ENCODE measurements at regions of chr1 and their contacts with region 1.

Region 1: DNA sequence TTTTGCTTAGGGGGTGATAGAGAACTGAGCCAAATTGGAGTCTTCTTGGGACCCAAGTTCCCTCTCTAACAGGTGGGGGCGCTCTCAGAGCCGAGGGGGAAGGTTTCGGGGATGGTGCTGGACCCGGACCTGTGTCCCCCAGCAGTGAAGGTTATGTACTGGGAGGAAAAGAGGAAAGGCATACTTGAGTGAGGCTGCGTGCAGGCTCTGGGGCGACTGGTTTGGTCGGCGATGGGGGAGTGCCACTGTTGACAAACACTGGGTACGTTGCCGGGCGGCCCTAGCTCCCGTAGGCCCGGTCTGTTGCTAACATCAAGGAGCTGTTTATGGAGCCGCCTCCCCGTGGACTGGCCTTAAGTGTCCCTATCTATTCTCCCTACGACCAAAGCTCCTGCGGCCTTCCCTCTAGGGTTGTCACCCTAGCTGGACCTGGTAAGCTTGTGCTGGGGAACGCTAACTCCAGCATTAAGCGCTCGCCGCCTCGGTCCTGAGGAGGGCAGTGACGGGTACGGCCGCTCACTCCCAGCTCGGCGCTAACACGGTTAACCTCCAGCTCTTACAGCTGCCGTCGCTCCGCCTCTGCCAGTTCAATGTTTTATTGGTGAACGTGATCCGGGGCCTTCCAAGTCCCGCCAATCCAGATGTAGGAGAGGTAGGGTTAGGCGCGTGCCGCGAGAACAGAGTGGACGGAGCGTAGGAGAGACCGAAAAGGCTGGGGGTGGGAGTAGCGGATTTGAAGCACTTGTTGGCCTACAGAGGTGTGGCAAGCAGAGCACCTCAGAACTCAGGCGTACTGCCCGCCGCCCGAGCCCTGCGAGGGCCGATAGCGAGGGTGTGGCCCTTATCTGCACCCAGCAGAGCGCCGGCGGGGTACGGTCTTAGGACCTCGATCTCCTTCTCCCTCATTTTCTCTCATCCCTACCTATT is at the start of gene PPOX:
- DNase-seq: peak; percentile 98
- H3K4me3 Mint-ChIP-seq: peak within 1 kb of the TSS; percentile 83
- H3K27ac Mint-ChIP-seq: peak within 1 kb of the TSS; percentile 98
- H3K4me1 Mint-ChIP-seq: peaks cover 45% of the 10 kb centered on the region
- H3K27me3 Mint-ChIP-seq: no peaks in the 10 kb centered on the region
- total RNA-seq, gene PPOX: 28.6 and 31.1 TPM in 2 replicates

Region 2: DNA sequence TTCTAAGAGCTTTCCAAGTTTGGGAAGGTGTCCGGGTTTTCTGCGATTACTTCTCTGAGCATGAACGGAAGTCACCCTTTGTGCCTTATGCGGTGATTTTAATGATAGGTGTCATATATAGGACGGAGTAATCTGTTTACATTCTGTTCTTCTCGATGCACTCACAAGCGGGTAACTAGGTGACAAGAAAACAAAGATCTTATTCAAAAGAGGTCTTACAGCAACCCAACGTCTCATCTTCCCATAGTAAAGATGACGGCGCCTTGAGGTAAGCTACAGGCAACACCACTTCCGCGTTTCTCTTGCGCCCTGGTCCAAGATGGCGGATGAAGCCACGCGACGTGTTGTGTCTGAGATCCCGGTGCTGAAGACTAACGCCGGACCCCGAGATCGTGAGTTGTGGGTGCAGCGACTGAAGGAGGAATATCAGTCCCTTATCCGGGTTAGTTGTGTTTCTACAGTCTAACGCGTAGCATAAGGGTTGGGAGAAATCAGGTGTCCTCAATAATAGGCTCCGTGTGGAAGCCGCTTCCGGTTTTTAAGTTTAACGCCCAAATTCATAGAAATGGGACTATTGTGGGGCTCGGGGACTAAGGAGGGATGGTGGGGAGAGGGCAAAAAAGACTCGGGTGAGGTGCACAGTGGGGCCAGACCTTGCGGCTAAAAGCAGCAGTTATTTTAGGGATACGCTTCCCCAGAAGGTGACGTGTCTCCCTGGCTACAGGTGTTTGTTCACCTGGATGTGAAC is 12.2 kb before region 1 on chr1 and contains the start of gene UFC1:
- intact Hi-C with region 1: loop called (anchors 1 kb)
- DNase-seq: peak; percentile 95
- H3K4me3 Mint-ChIP-seq: peak within 1 kb of the TSS; percentile 97
- H3K27ac Mint-ChIP-seq: peak within 1 kb of the TSS; percentile 100
- H3K4me1 Mint-ChIP-seq: peaks cover 23% of the 10 kb centered on the region
- H3K27me3 Mint-ChIP-seq: no peaks in the 10 kb centered on the region
- total RNA-seq, gene UFC1: 84.2 and 86.6 TPM in 2 replicates

Region 3: DNA sequence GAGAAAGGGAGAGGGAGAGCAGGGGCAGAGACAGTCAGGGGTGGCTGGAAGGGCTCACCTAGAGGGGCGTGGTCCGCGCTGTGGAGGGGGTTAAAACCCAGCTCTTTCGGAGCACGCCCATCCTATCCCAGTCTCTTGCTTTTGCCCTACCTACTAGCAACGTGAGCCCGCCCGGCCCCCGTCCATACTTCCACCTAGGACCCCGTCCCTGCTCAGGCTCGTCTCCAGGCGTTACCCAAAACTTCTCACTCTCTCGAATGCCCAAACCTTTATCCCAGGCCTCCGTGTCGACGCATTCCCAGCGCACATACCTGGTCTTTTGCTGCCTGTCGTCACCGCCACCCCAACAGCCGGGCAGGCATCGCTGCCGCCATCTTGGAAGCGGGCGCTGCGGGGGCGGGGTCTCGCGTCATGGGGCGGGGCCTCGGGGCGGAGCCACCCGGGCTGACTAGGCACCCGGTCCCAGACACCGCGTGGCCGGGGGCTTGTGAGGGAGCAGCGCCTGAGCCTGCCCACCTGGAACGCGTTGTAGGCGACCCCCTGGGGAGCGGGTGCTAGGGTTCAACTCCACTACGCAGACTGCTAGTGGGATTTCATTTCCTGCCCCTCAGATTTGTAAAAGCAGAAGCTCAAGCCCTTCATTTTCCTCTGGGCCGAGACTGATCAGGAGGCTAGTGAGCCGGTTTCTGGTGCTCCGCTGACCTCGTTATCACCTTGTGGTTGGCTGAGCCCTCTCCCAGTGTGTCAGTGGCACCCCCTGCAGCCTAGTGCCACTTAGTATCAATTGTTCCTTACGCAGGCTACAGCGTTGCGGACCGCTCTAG is 11.3 kb after region 1 on chr1 and contains the start of gene B4GALT3:
- intact Hi-C with region 1: loop called (anchors 1 kb)
- DNase-seq: peak; percentile 99
- H3K4me3 Mint-ChIP-seq: peak within 1 kb of the TSS; percentile 100
- H3K27ac Mint-ChIP-seq: peak within 1 kb of the TSS; percentile 100
- H3K4me1 Mint-ChIP-seq: peaks cover 59% of the 10 kb centered on the region
- H3K27me3 Mint-ChIP-seq: no peaks in the 10 kb centered on the region
- total RNA-seq, gene B4GALT3: 65.1 and 69.9 TPM in 2 replicates

Region 4: DNA sequence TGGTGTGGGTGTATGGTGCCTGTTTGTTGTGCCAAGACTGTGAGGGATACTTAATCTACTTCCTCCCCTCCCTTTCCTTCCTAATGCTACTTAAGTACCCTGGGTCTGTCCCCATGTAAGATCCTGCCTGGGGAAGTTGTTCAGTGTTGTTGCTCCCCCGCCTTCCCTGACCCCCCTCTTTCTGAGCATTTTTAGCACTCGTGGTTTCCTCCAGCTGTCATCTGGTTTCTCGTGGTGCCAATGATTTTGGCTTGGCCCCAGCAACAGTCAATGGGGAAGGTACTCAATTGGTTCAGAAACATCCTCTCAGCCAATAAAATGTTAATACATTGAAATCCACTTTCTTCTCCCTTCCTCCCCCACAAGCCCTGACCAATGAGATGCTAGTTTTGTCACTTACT is 19.3 kb after region 1 on chr1:
- intact Hi-C with region 1: loop called (anchors 2 kb)
- DNase-seq: peak; percentile 94
- H3K4me3 Mint-ChIP-seq: peak overlapping the region; percentile 75
- H3K27ac Mint-ChIP-seq: peak overlapping the region; percentile 96
- H3K4me1 Mint-ChIP-seq: peaks cover 69% of the 10 kb centered on the region
- H3K27me3 Mint-ChIP-seq: no peaks in the 10 kb centered on the region

Measured in activated CD4-positive, alpha-beta T cell treated with anti-CD3 and anti-CD28 coated beads, Interleukin-2, amount 10 ng/mL, durations not matched to agents 24 days and 14 days (primary cell).